ENCODE measurements at regions of chr11 and their contacts with region 1.

Region 1: GRCh38 chr11:44301856-44302231 is 8.1 kb downstream of the ALX4 start:
- DNase-seq: no peak
- ATAC-seq: peak in 2 of 8 donors; percentile 32 to 44
- H3K4me3 ChIP-seq: no peak overlapping the region
- H3K27ac ChIP-seq: no peak overlapping the region
- H3K4me1 ChIP-seq: peaks cover 9 to 28% (median 21%) of the 10 kb centered on the region in 9 donors
- H3K27me3 ChIP-seq: peaks cover 22 to 79% (median 65%) of the 10 kb centered on the region in 7 donors
- CTCF ChIP-seq: no peak

Region 2: GRCh38 chr11:44110231-44110679 is 191.6 kb before region 1 on chr11:
- intact Hi-C with region 1: no loop called
- DNase-seq: peak; percentile 33 to 82
- ATAC-seq: peak; percentile 69 to 89 (median 84)
- H3K4me3 ChIP-seq: no peak overlapping the region
- H3K27ac ChIP-seq: peak overlapping the region in 3 of 10 donors; percentile 8 to 38 (median 18)
- H3K4me1 ChIP-seq: peaks cover 9 to 46% (median 29%) of the 10 kb centered on the region in 9 donors
- H3K27me3 ChIP-seq: no peaks in the 10 kb centered on the region
- CTCF ChIP-seq: peak; percentile 59 to 88 (median 79)

Region 3: DNA sequence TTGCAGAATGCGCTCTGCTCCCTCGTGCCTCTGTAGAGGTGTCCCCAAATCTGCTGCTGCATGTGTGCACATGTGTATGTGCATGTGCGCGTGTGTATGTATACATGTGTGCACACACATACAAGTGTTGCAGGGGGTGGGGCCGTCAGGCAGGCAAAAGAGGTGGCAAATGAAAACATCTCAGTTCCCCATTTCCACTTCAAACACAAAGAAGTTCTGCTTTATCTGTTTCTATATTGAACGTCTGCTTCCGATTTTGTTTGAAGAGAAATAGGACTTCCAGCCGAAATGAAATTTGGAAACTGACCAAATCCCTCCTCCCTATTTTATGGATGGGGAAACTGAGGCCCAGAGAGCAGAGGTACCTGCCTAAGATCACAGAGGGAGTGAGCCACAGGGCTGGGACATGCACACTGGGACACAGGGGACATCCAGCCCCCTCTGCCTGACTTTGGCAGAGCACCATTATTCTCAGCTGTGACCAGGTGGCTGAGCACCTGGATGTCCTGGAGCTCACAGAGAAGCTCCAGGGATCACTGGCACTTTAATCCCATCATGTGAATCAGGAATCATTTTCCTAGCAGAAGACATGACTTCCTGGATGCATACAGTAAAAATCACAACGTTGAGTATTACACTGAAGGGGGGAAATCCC is 49.3 kb after region 1 on chr11:
- intact Hi-C with region 1: loop called in 1 of 10 experiments (anchors 5 kb)
- DNase-seq: no peak
- ATAC-seq: no peak
- H3K4me3 ChIP-seq: no peak overlapping the region
- H3K27ac ChIP-seq: no peak overlapping the region
- H3K4me1 ChIP-seq: no peaks in the 10 kb centered on the region
- H3K27me3 ChIP-seq: peaks cover 0 to 23% (median 0%) of the 10 kb centered on the region in 7 donors
- CTCF ChIP-seq: no peak

Region 4: DNA sequence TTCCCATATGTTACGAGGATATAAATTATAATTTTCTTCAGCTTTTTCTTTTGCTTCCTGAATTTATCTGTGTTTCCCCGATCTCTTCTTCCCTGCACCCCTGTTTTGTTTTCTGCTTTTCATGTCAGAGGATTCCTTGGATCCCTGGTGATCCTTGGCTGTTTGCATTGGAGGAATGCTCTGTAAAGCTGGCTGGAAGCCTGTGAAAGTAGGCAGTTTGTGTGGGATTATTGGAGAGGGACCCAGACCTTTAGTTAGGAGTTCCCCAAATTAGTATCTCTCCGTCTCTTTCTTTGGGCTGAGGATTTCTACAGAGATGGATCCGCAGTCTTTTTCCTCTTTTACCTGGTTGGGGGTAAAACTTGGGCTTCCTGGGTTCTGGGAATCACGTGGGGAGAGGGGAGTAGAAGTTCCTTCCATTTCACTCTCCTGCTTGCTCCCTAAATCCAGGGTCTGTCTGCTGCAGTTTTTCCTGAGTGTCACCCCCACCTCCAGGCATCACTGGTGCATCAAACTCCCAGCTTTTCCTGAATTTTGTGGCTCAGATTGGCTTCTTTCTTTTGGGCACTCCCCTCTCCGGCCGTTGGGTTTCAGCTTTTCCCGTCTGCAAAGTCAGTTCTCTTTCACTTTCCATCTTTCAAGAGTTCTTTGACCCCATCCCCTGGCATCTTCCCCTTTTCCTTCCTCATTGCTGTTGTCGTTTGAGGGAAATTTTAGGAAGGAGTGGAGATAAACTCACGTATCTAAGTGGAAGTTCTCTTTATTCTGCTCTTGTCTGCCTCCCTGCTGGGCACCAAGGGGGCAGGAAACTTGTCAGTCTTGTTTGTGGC is 87.2 kb after region 1 on chr11:
- intact Hi-C with region 1: no loop called
- DNase-seq: no peak
- ATAC-seq: no peak
- H3K4me3 ChIP-seq: no peak overlapping the region
- H3K27ac ChIP-seq: no peak overlapping the region
- H3K4me1 ChIP-seq: no peaks in the 10 kb centered on the region
- H3K27me3 ChIP-seq: peaks cover 0 to 20% (median 8%) of the 10 kb centered on the region in 7 donors
- CTCF ChIP-seq: no peak